HepG2 (cell line): ENCODE measurements at regions of chr2 and their contacts with region 1.

Region 1: DNA sequence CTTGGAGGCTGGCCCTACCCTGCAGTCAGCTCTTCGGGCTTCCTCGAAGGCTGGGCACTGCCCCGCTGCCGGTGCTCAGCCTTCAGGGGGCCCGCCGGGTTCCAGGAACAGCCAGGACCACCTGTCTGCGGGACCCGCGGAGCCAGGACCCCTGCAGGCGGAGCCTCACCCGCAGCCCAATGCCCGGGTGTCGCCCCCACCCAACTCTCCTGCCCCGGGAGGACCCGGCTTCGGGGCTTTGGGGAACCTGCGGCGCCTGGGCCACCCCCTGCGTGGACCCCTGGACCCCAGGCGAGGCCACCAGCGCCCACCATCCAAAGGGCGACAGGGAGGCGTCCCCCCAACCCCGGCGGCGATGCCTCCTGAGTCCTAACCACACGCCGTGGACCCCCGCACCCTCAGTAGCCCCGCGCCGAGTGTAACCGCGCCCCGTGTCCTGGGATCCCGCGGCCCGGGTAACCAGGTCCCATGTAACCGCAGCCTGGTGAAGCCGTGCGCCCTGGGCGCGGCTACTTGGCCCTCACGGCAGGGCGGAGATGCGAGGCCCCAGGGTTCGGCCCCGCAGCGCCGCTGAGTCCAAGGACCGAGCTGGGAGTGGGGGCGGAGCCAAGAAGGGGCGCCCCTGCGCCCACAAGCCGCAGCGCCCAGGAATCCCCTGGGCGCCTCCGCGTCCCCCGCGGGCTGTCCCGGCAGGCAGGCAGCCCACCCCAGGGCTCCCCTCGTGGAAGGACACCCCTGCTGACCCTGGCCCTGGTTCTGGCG is 11.0 kb upstream of the UBE2F start:
- DNase-seq: no peak
- ATAC-seq: peak; percentile 64
- H3K4me3 ChIP-seq: peak overlapping the region; percentile 32 to 58 (median 43); a peak in 5 of 6 replicates
- H3K27ac ChIP-seq: no peak overlapping the region
- H3K4me1 ChIP-seq: 0 out of 2 replicates have a peak, but pooled peaks cover 5% of the 10 kb centered on the region
- H3K27me3 ChIP-seq: peaks cover 11 to 55% of the 10 kb centered on the region in 2 experiments
- CTCF ChIP-seq: no peak
- EP300 ChIP-seq: no peak
- POLR2A ChIP-seq: no peak
- RAD21 ChIP-seq: no peak

Region 2: DNA sequence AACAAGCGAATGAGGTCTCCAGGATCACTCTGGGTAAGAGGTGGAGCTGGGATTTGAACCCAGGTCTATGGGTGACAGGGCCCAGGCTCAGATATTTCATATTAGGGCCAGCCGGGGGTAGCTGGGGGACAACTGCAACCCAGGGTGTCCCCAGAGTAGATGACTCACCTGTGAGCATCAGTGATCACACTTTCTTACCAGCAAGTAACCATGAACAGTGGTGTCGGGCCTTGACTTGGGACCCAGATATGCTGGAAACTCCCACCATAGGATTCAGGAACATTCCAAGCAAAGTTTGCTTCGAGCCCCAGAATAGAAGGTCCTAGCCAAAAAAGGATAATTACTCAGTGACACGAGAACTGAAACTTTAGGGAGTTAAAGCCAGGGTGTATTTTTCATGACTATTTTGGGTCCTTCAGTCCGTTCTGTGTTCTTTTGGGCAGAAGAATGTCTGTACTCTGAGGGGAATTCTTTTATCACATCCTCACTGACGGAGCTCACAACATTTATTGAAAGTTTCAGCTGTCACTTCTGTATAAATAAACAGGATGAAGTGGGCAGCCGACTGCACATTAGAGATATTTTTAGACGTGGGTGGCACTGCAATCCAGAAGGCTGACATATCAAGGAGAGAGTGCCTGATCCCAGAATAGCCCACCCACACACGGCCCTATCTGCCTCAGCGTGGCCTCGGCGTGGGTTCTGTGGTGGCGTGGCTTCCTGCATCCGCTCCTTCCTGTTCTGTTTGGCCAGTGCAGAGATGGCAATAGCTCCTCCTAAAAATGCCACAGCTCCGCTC is 50.8 kb before region 1 on chr2:
- CTCF ChIA-PET with region 1: no interaction called
- POLR2A ChIA-PET with region 1: no interaction called
- in situ Hi-C with region 1: no loop called
- intact Hi-C with region 1: no loop called
- DNase-seq: no peak
- ATAC-seq: no peak
- H3K4me3 ChIP-seq: no peak overlapping the region
- H3K27ac ChIP-seq: no peak overlapping the region
- H3K4me1 ChIP-seq: no peaks in the 10 kb centered on the region
- H3K27me3 ChIP-seq: peaks cover 3 to 23% of the 10 kb centered on the region in 2 experiments; a peak in 3 of 5 replicates
- CTCF ChIP-seq: no peak
- EP300 ChIP-seq: no peak
- POLR2A ChIP-seq: no peak
- RAD21 ChIP-seq: no peak

Region 3: DNA sequence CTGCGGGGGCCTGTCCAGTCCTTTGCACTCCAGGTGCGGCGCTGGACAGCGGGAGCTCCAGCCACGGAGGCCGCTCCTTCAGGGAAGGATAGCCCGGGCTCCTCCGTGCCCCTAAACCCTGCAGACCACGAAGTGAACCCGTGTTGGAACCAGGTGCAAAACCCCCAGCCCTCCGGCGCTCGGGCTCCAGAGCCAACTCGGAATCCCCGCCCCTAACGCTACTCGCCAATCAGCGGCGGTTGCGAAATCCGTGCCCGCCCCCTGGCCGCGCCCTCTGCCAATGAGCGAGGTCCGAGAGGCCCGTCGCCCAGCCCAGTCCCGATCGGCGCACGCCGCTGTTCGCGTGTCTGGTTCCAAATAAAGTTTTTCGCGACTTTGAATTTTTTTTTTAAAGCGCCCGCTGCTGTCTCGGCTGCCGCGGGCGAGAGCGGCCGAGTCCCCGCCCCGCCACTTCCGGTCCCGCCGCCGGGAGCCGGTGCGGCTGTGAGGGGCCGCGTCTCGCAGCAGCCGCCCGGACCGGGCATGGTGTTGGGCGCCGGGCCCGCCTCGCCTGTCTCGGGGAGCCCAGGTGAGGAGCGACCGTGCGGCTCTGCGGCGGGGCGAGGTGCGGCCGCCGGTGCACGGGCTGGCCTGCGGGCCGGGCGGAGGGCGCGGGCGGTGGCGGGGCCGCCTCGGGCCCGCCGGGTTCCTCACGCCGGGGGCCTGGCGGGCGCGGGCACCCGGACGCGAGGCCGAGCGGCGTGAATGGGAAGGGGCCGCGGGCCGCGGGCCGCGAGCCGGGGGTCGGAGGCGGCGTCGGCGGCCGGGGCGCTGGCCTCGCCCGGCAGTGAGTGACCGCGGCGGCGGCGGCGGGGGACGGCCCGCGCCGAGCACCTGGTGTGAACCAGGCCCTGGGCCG is 11.0 kb after region 1 on chr2 and contains the start of gene UBE2F:
- CTCF ChIA-PET with region 1: no interaction called
- POLR2A ChIA-PET with region 1: interaction called, 4 read pairs
- in situ Hi-C with region 1: no loop called
- intact Hi-C with region 1: loop called (anchors 1 kb)
- DNase-seq: peak; percentile 95
- ATAC-seq: peak; percentile 93
- H3K4me3 ChIP-seq: peak within 1 kb of the TSS; percentile 89 to 99 (median 92)
- H3K27ac ChIP-seq: peak within 1 kb of the TSS; percentile 45
- H3K4me1 ChIP-seq: peaks cover 43% of the 10 kb centered on the region
- H3K27me3 ChIP-seq: peaks cover 0 to 16% of the 10 kb centered on the region in 2 experiments; a peak in 3 of 5 replicates
- CTCF ChIP-seq: no peak
- EP300 ChIP-seq: peak; percentile 72 to 89
- POLR2A ChIP-seq: peak; percentile 49 to 85; a peak in 3 of 4 replicates
- RAD21 ChIP-seq: peak; percentile 45
- total RNA-seq, gene UBE2F: 73.1 and 79.8 TPM in 2 replicates